ENCODE measurements at regions of chr2 and their contacts with region 1.

Region 1: DNA sequence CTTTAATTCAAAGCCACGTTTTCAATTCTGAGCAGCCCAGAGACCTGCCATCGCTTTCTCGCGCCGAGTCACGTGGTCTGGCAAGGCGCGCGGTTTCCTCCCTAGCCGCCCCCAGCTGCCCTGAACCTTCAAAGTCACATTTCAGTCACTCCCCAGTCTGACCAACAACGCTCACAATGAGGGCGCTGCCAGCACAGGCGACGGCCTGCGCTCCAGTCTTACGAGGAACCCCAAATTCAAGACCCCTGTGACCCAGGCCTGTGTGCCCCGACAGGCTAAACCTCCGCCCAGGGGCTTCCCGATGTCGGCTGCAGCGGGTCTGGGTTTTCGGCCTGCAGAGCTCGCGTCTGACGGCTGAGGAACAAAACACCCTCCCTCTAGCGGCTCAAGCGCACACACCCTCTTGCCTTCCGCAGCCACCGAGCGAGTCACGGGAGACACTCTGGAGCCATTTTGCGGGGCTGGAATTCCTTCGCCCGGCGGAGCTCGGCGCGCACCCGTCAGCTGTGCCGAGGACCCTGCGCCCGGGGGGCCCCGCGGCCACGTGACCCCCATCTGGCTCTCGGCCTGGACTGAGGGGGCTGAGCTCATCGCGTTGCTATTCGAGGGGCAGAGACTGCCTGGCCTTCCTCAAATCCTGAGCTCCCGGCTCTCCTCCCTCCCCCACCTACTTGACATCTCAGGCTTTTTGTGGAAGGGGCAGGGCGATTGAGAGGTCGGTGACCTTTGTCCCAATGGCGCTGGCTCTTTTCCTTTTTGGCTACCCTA is 69.9 kb upstream of the ITGB6 start:
- DNase-seq: peak; percentile 88 to 94
- ATAC-seq: peak; percentile 84 to 90 (median 86)
- H3K4me3 ChIP-seq: peak overlapping the region; percentile 69
- H3K27ac ChIP-seq: peak overlapping the region; percentile 93
- H3K4me1 ChIP-seq: peaks cover 21% of the 10 kb centered on the region
- H3K27me3 ChIP-seq: no peaks in the 10 kb centered on the region
- CTCF ChIP-seq: peak; percentile 62

Region 2: DNA sequence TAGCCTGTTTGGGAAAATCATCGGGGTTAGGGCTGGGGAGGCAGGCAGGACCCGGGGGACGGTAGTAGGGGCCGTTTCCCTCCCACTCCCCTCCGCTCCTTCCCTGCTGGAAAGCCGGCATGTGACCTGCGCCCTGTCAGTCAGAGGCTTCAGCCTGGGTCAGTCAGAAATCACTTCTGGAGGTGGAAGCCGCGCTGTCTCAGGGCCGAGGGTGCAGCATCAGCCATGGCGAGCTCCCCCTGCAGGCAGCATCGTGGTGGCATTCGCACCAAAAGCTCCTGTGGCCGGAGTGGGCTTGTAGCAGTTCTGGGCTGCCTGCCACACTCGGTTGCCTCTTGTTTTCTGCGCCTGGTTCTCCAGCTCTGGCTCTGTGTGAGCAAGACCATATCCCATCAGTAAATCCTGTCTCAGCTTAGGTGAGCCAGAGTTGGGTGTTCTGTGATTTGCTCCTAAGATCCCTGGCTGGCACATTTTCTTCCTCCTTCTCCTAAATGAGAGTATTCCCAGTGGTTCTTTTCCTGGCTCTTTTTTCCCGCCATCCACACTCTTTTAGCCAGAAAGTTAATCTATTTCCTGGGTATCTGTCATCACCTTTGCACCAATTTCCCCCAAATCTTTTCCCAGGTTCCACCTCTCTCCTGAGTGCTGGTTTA is 348.1 kb before region 1 on chr2:
- intact Hi-C with region 1: no loop called
- DNase-seq: peak; percentile 54 to 69
- ATAC-seq: peak in 1 of 4 donors; percentile 37
- H3K4me3 ChIP-seq: no peak overlapping the region
- H3K27ac ChIP-seq: no peak overlapping the region
- H3K4me1 ChIP-seq: no peaks in the 10 kb centered on the region
- H3K27me3 ChIP-seq: peaks cover 0 to 6% (median 5%) of the 10 kb centered on the region in 3 donors
- CTCF ChIP-seq: peak; percentile 39

Region 3: DNA sequence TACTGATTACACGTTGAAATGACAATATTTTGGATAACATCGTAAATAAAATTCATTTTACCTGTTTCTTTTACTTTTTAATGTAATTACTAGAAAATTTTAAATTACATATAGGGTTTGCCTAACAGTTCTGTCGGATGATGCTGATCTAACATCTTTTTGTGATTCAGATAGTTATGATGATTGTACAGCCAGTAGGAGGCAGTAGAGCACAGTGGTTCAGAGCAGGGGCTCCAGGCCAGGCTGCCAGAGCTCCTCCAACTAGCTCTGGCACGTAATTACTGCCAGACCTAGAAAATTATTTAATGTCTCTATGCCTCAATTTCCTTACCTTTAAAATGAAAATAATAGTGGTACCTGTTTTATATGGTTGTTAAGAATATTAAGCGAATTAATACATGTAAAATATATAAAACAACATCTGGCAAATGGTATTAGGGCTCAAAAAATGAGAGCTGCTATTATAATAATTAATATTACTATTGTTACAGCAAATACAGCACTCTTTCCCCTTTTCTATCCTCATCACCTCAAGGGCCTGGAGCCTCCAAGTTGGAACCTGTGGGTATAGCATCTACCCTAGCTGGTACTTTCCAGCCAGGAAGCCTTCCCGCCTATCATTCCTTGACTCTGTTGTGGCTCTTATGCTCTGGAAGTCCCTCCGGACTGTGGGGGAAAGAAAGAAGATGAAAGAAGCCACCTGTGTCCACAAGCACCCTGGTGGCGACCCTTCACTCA is 159.9 kb before region 1 on chr2:
- intact Hi-C with region 1: loop called in 1 of 2 experiments (anchors 5 kb)
- DNase-seq: peak; percentile 45 to 70
- ATAC-seq: peak; percentile 89 to 98 (median 94)
- H3K4me3 ChIP-seq: no peak overlapping the region
- H3K27ac ChIP-seq: no peak overlapping the region
- H3K4me1 ChIP-seq: peaks cover 4% of the 10 kb centered on the region
- H3K27me3 ChIP-seq: no peaks in the 10 kb centered on the region
- CTCF ChIP-seq: peak; percentile 87

Region 4: DNA sequence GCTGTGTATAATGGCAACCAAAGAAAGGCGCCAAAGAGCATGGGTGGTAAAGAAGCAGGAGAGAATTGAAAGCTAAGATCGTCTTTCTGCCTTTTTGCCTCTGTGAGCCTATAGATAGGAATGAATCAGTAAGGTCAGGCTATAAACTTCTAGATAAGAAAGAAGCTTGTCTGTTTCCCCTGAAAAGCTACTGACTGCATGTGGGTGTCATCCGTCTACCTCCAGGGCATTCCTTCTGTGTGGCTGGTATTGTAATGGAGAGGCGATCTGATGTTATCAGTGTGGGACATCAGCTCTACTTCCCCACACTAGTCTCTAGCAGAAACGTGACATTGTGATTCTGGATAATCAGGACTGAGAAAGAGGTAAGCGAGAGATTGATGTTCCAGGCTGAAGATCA is 144.2 kb before region 1 on chr2:
- intact Hi-C with region 1: loop called in 1 of 2 experiments (anchors 1 kb)
- DNase-seq: no peak
- ATAC-seq: no peak
- H3K4me3 ChIP-seq: no peak overlapping the region
- H3K27ac ChIP-seq: no peak overlapping the region
- H3K4me1 ChIP-seq: peaks cover 7% of the 10 kb centered on the region
- H3K27me3 ChIP-seq: no peaks in the 10 kb centered on the region
- CTCF ChIP-seq: no peak

Region 5: DNA sequence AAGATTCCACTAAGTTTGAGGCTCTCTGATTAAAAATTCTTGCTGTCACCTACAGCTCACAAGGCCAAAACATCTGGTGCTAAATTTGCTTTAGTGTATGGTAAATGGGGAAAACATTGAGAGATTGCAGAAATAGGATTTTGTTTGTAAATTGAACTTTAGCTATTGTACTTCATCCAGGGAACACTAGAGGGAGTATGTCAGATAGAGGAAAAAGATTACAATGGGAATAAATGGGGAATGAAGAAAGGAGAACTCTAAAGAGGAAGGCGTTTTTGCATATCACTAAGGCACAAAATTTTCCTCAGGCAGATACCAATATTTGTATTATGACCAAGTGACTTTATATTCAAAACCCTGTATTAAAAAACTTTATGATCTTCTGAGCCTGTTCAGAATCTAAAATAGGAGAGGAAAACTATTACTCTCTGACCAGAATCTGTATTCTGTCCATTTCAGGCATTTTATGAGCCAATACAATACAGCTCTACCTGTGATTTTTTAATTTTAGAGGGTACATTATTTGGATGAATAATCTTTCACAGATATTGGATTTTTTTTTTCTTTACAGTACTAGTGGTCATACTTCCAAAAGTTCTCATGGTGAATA is 17.6 kb before region 1 on chr2:
- intact Hi-C with region 1: loop called in 1 of 2 experiments (anchors 1 kb)
- DNase-seq: no peak
- ATAC-seq: peak; percentile 40 to 75 (median 57)
- H3K4me3 ChIP-seq: peak overlapping the region; percentile 69
- H3K27ac ChIP-seq: peak overlapping the region; percentile 85
- H3K4me1 ChIP-seq: peaks cover 39% of the 10 kb centered on the region
- H3K27me3 ChIP-seq: no peaks in the 10 kb centered on the region
- CTCF ChIP-seq: peak; percentile 85

Region 6: GRCh38 chr2:160994141-160995002 is 724.4 kb after region 1 on chr2:
- intact Hi-C with region 1: loop called in 1 of 2 experiments (anchors 10 kb)
- DNase-seq: peak; percentile 32 to 62
- ATAC-seq: peak; percentile 90 to 96 (median 93)
- H3K4me3 ChIP-seq: peak overlapping the region; percentile 13
- H3K27ac ChIP-seq: peak overlapping the region; percentile 61
- H3K4me1 ChIP-seq: peaks cover 6% of the 10 kb centered on the region
- H3K27me3 ChIP-seq: no peaks in the 10 kb centered on the region
- CTCF ChIP-seq: peak; percentile 94

Measured in psoas muscle (tissue), 8 donors.